T-cell (primary cell): ENCODE measurements at regions of chr5 and their contacts with region 1.

Region 1: DNA sequence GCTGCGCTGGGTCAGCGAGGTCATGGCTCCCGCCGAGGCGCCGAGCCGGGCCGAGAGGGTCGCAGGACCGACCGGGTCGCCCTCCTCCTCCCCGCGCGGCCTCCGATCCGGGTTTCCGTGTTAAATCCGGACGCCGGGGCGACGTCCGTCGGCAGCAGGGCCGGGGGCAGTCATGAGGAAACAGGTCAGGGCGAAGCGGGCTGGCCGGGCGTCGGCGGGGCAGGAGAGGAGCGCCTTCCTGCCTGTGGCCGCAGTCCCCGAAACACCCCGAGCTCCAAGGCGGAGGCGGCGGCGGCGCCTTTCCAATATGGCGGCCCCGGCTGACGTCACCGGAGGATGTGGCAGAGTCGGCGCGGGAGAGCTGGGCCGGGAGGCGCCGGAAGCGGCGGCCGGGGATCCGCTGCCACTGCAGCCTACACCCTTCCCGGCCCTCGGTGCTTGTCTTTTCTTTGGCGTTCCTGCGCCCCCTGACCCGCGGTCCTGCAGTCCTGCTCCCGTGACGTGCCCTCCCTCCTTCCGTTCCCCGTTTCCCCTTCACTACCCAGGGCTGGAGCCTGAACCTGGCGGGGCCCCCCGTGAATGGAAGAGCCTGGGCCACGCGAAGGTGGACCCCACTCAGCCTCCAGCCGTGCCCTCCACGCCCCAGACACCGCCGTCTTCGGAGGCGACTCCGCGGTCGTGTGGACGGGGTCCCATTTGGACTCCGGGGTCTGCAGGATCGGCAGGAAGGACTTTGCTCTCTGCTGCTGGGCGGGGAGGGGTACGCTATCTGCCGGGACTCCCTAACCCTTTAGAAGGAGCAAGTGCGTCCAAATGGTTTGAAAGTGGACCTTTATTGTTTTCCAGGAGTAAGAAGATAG is at the start of gene GOLPH3:
- DNase-seq: peak; percentile 82 to 96 (median 91)
- ATAC-seq: peak; percentile 92 to 93 (median 93)
- H3K4me3 ChIP-seq: peak within 1 kb of the TSS; percentile 80 to 81
- H3K4me3 Mint-ChIP-seq: peak within 1 kb of the TSS; percentile 97 to 99 (median 97)
- H3K27ac ChIP-seq: peak within 1 kb of the TSS; percentile 94
- H3K27ac Mint-ChIP-seq: peak within 1 kb of the TSS; percentile 96 to 97
- H3K4me1 ChIP-seq: peaks cover 15 to 16% of the 10 kb centered on the region in 2 experiments
- H3K4me1 Mint-ChIP-seq: peaks cover 31 to 37% (median 32%) of the 10 kb centered on the region in 3 donors
- H3K27me3 ChIP-seq: no peaks in the 10 kb centered on the region
- H3K27me3 Mint-ChIP-seq: peaks cover 4 to 7% of the 10 kb centered on the region in 2 donors
- total RNA-seq, gene GOLPH3: 49.3 to 87.6 (median 73.8) TPM

Region 2: GRCh38 chr5:32379421-32379820 is 205.2 kb after region 1 on chr5:
- CTCF ChIA-PET with region 1: no interaction called
- POLR2A ChIA-PET with region 1: interaction called, 3 to 16 read pairs
- DNase-seq: no peak
- ATAC-seq: no peak
- H3K4me3 ChIP-seq: no peak overlapping the region
- H3K4me3 Mint-ChIP-seq: no peak overlapping the region
- H3K27ac ChIP-seq: no peak overlapping the region
- H3K27ac Mint-ChIP-seq: no peak overlapping the region
- H3K4me1 ChIP-seq: no peaks in the 10 kb centered on the region
- H3K4me1 Mint-ChIP-seq: no peaks in the 10 kb centered on the region
- H3K27me3 ChIP-seq: no peaks in the 10 kb centered on the region
- H3K27me3 Mint-ChIP-seq: no peaks in the 10 kb centered on the region